Gastrocnemius medialis (tissue), 4 donors: ENCODE measurements at regions of chr17 and their contacts with region 1.

Region 1: DNA sequence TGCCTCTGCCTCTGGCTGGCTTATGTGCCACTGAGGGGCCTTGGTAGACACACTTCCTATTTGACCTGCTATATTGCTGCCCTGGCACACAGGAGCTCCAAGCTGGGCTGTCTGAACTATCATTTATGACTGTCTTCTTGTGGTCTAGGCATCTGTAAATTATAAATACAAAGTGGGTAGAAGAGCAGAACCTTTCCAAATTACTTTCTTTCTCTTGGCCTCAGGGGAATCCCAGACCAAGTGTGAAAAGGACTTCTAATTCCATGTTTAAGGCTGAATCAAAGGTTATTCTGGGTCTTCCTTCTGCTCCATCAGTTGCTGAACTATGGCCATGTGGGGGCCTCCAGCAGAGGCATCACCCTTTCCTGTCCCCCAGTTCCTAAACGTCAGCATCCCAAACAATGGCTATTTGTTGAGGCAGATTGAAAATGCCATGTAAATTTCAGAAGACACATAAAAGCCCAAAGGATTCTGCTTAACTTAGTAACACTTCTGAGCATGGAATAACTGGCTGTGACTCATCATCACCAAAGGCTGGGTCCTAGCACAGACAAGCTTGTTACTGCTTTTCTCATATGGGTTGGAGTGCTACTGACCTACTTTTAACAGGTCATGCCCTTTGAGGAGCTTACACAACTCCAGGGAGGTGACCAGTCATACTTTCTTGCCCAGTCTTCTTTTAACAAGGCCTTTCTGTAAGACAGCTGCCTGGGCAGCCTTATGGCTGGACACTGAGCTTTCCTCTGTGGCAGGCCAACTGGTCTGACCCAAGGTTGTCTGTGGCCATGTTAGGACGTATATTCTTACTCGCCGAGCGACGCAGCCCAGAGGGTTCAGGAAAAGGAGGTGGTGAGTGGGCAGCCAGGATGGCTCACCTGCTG is 154.8 kb downstream of the VPS53 start:
- DNase-seq: peak; percentile 52 to 79
- ATAC-seq: peak; percentile 97
- H3K4me3 ChIP-seq: no peak overlapping the region
- H3K27ac ChIP-seq: peak overlapping the region; percentile 80 to 85 (median 84)
- H3K4me1 ChIP-seq: peaks cover 14 to 22% of the 10 kb centered on the region in 2 donors
- H3K27me3 ChIP-seq: no peaks in the 10 kb centered on the region
- CTCF ChIP-seq: no peak
- POLR2A ChIP-seq: no peak

Region 2: GRCh38 chr17:601244-601925 is 41.6 kb after region 1 on chr17:
- in situ Hi-C with region 1: no loop called
- intact Hi-C with region 1: loop called (anchors 5 kb)
- DNase-seq: peak in 1 of 2 donors; percentile 34
- ATAC-seq: peak in 1 of 2 donors; percentile 36
- H3K4me3 ChIP-seq: no peak overlapping the region
- H3K27ac ChIP-seq: peak overlapping the region; percentile 64 to 78 (median 70)
- H3K4me1 ChIP-seq: peaks cover 17 to 27% of the 10 kb centered on the region in 2 donors
- H3K27me3 ChIP-seq: no peaks in the 10 kb centered on the region
- CTCF ChIP-seq: no peak
- POLR2A ChIP-seq: no peak

Region 3: GRCh38 chr17:732067-732901 is 172.5 kb after region 1 on chr17 and contains the start of gene TLCD3A:
- in situ Hi-C with region 1: no loop called
- intact Hi-C with region 1: no loop called
- DNase-seq: peak; percentile 40 to 45
- ATAC-seq: peak; percentile 65 to 72
- H3K4me3 ChIP-seq: peak within 1 kb of the TSS; percentile 67 to 77 (median 74)
- H3K27ac ChIP-seq: peak within 1 kb of the TSS; percentile 56 to 71 (median 66)
- H3K4me1 ChIP-seq: peaks cover 9 to 12% of the 10 kb centered on the region in 2 donors
- H3K27me3 ChIP-seq: no peaks in the 10 kb centered on the region
- CTCF ChIP-seq: no peak
- POLR2A ChIP-seq: peak in 1 of 2 donors; percentile 37
- total RNA-seq, gene TLCD3A: 0.39 to 1.4 (median 0.86) TPM